CD8-positive, alpha-beta T cell (primary cell): ENCODE measurements at regions of chr10 and their contacts with region 1.

Region 1: DNA sequence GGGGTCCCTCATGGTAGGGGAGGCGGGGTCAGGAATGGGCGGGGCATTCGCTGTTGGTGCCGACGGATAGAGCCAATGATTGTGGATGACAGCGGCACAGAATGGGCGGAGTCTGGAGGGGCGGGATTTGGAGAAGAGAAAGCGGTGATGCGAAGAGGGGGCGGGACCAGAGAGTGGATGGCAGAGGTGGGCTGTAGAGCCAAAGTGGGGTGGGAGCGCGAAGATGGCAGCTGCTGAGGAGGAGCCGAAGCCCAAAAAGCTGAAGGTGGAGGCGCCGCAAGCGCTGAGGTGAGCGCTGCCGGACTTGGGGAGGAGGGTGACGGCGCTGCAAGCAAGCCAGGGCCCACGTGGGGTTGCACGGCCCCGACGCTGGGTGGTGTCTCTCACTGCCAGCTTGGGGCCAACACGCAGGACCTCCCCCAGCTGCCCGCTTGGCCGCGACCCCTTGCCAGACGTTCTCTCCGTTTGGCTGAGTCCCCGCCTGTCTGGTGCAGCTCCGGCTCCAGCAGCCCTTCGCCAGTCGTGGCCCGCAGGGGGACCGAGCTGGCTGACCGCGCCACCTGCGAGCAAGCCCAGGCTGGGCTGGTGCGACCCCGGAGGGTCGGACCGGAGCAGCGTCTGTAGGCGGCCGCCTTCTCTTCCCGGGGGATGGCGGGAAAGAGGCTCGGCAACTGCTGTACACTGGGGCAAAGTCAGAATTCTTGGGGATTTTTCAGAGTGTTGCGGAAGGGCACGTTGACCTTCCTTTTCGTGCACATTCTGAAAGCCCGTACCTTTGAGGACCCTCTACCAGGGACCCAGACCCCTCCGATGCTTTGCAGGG is at the start of gene ADK:
- DNase-seq: peak; percentile 99 to 100 (median 100)
- ATAC-seq: peak; percentile 96
- H3K4me3 ChIP-seq: peak within 1 kb of the TSS; percentile 70 to 78
- H3K4me3 Mint-ChIP-seq: no peak within 1 kb of the TSS
- H3K27ac ChIP-seq: peak within 1 kb of the TSS; percentile 86 to 99
- H3K27ac Mint-ChIP-seq: no peak within 1 kb of the TSS
- H3K4me1 ChIP-seq: peaks cover 30% of the 10 kb centered on the region
- H3K4me1 Mint-ChIP-seq: peaks cover 42% of the 10 kb centered on the region
- H3K27me3 ChIP-seq: no peaks in the 10 kb centered on the region
- H3K27me3 Mint-ChIP-seq: no peaks in the 10 kb centered on the region
- CTCF ChIP-seq: peak; percentile 22
- total RNA-seq, gene ADK: 20.7 to 21.8 TPM

Region 2: DNA sequence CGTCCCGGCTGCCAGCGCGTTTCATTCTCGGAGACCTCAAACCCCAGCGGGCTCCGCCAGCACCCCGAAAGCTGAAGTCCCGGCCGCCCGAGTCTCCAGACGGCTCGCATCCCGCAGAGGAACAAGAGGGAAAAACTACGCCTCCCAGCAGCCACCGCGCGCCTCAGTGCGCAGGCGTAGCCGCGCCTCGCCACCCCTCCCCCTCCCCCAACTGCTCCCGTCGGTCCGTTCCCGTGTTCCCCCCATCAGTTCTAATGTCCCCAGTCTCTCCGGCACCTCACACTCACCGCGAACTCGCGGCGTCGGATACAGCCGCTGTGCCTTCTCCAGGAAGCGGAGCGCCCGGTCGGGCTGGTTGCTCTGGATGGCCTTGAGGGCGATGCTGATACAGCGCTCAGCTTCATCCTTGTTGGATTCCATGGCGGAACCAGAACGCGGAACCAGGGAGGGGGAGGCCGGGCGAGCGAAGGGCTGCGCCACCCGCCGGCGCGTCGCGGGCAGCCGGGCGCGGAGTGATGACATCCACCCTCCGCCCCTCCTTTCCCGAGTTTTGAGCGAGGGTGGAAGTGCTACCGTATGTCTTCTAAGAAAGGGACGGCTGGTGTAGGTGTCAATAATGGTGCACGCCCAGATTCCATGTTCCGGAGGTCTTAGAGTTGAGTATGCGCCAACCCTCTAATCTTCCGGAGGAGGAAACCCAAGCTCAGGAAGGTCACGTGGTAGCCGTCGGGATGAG is 1796.6 kb before region 1 on chr10 and contains the start of gene DNAJB12:
- CTCF ChIA-PET with region 1: no interaction called
- POLR2A ChIA-PET with region 1: no interaction called
- intact Hi-C with region 1: loop called in 1 of 2 experiments (anchors 10 kb)
- DNase-seq: peak; percentile 76 to 95 (median 88)
- ATAC-seq: peak; percentile 82
- H3K4me3 ChIP-seq: peak within 1 kb of the TSS; percentile 96 to 98
- H3K4me3 Mint-ChIP-seq: peak within 1 kb of the TSS; percentile 98
- H3K27ac ChIP-seq: peak within 1 kb of the TSS; percentile 87 to 97
- H3K27ac Mint-ChIP-seq: peak within 1 kb of the TSS; percentile 96
- H3K4me1 ChIP-seq: peaks cover 19% of the 10 kb centered on the region
- H3K4me1 Mint-ChIP-seq: peaks cover 45% of the 10 kb centered on the region
- H3K27me3 ChIP-seq: no peaks in the 10 kb centered on the region
- H3K27me3 Mint-ChIP-seq: no peaks in the 10 kb centered on the region
- CTCF ChIP-seq: no peak
- total RNA-seq, gene DNAJB12: 33.9 to 37.5 TPM

Region 3: DNA sequence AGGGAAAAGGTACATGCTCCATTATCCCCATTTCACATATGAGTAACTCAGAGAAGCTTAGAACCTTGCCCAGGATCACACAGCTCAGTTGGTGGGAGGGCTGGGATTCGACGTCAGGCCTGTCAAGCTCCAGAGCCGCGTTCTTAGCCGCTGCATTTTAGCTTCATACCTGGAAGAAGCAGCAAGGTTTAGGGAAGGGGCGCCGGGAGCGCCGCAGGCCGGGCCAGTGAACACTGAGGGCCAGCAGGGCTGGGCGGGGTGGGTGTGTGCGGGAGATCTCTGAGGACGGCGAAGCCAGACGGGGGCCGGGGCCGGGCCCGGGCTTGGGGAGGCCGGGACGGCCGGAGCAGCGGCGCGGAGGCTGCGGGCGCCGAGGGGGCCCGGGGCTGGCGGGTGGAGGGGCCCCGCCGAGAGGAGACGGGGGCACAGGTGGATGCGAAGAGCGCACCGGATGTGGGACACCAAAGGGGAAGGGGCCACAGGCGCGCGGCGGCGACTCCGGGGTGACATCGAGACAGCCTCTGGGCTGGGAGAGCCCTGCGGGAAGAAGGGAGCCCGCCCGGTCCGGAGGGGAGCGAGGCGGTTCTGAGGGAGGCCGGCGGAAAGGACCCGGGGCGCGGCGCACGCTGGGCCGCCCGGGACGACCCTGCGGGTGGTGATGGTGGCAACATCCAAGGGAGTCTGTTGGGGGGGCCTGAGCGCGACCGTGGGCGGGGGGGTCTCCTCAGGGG is 340.4 kb before region 1 on chr10:
- CTCF ChIA-PET with region 1: interaction called, 3 read pairs
- POLR2A ChIA-PET with region 1: no interaction called
- intact Hi-C with region 1: loop called in 1 of 2 experiments (anchors 1 kb)
- DNase-seq: peak; percentile 19 to 79 (median 66)
- ATAC-seq: peak; percentile 12
- H3K4me3 ChIP-seq: peak overlapping the region; percentile 56 to 87
- H3K4me3 Mint-ChIP-seq: peak overlapping the region; percentile 89
- H3K27ac ChIP-seq: peak overlapping the region; percentile 71 to 91
- H3K27ac Mint-ChIP-seq: peak overlapping the region; percentile 95
- H3K4me1 ChIP-seq: peaks cover 48% of the 10 kb centered on the region
- H3K4me1 Mint-ChIP-seq: peaks cover 44% of the 10 kb centered on the region
- H3K27me3 ChIP-seq: no peaks in the 10 kb centered on the region
- H3K27me3 Mint-ChIP-seq: no peaks in the 10 kb centered on the region
- CTCF ChIP-seq: no peak

Region 4: GRCh38 chr10:74176380-74177139 is 25.3 kb after region 1 on chr10:
- CTCF ChIA-PET with region 1: interaction called, 5 read pairs
- POLR2A ChIA-PET with region 1: interaction called, 20 read pairs
- intact Hi-C with region 1: loop called (anchors 1 kb)
- DNase-seq: peak; percentile 89 to 99 (median 96)
- ATAC-seq: peak; percentile 93
- H3K4me3 ChIP-seq: peak overlapping the region; percentile 89 to 91
- H3K4me3 Mint-ChIP-seq: peak overlapping the region; percentile 93
- H3K27ac ChIP-seq: peak overlapping the region; percentile 85 to 89
- H3K27ac Mint-ChIP-seq: peak overlapping the region; percentile 97
- H3K4me1 ChIP-seq: peaks cover 34% of the 10 kb centered on the region
- H3K4me1 Mint-ChIP-seq: peaks cover 42% of the 10 kb centered on the region
- H3K27me3 ChIP-seq: no peaks in the 10 kb centered on the region
- H3K27me3 Mint-ChIP-seq: no peaks in the 10 kb centered on the region
- CTCF ChIP-seq: no peak

Region 5: DNA sequence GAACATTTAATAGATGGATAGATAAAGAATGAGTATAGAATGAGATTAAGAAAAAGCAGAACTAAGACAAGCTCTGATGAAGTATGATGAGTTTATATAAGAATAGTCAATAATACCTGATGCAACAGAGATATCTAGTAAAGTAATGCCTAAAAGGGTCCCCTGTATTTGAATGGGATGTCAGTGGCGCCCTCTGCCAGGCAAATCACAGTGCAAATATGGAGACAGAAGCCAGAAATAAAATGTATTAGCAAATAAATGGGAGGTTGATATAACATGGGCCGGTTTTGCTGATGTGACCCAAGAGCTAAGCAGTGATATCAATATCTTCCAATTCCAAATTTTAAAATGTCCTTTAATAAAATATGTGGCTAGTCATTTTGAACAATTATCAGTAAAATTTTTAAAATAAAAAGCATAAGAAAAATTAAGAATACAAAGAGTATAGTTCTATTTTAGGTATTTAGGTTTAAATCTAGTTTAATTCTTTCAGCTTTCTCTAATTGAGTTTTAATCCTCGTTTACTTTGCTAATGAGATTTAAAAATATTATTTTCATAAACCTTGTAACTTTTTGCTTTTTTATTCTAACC is 62.4 kb after region 1 on chr10:
- CTCF ChIA-PET with region 1: interaction called, 14 read pairs
- POLR2A ChIA-PET with region 1: interaction called, 3 read pairs
- intact Hi-C with region 1: loop called (anchors 5 kb)
- DNase-seq: peak; percentile 20 to 70 (median 56)
- ATAC-seq: peak; percentile 46
- H3K4me3 ChIP-seq: no peak overlapping the region
- H3K4me3 Mint-ChIP-seq: no peak overlapping the region
- H3K27ac ChIP-seq: no peak overlapping the region
- H3K27ac Mint-ChIP-seq: no peak overlapping the region
- H3K4me1 ChIP-seq: no peaks in the 10 kb centered on the region
- H3K4me1 Mint-ChIP-seq: peaks cover 20% of the 10 kb centered on the region
- H3K27me3 ChIP-seq: no peaks in the 10 kb centered on the region
- H3K27me3 Mint-ChIP-seq: no peaks in the 10 kb centered on the region
- CTCF ChIP-seq: peak; percentile 51

Region 6: GRCh38 chr10:74589226-74589673 is 438.0 kb after region 1 on chr10:
- CTCF ChIA-PET with region 1: no interaction called
- POLR2A ChIA-PET with region 1: no interaction called
- intact Hi-C with region 1: loop called in 1 of 2 experiments (anchors 5 kb)
- DNase-seq: peak; percentile 70 to 97 (median 86)
- ATAC-seq: peak; percentile 76
- H3K4me3 ChIP-seq: no peak overlapping the region
- H3K4me3 Mint-ChIP-seq: peak overlapping the region; percentile 49
- H3K27ac ChIP-seq: peak overlapping the region; percentile 36 to 61
- H3K27ac Mint-ChIP-seq: peak overlapping the region; percentile 87
- H3K4me1 ChIP-seq: peaks cover 48% of the 10 kb centered on the region
- H3K4me1 Mint-ChIP-seq: peaks cover 61% of the 10 kb centered on the region
- H3K27me3 ChIP-seq: no peaks in the 10 kb centered on the region
- H3K27me3 Mint-ChIP-seq: no peaks in the 10 kb centered on the region
- CTCF ChIP-seq: no peak

Region 7: DNA sequence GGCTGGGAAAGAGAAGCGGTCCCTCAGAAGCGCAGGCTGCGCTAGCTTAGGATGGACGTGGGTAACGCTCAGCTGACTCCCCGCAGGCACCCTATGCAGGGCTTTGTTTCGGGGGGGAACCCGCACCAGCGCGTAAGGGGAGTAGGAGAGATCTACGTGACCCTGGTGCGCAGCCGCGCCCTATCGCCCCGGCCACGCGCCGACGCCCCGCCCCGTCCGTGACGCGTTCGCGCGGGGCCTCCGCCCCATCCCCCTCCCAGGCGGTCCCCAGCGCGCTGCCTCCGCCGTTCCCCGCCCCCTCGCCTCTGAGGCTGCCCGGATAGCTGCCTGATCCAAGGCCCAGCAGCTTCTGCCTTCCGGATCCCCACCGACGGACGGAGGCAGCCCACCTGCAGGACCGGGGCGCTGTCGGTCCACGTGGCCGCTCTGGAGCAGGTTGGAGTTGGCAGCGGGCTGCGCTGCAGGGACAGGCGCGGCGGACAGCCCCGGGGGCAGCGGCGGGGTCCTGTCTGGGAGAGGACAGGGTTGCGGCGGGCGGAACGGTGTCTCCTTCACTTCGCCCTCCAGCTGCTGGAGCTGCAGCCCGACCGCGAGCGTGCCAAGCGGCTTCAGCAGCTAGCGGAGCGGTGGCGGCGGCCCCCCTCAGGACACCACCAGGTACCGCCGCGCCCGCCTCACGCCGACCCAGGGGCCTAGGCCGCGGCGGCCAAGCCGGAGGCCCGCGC is 1059.2 kb after region 1 on chr10 and contains the start of gene VDAC2:
- CTCF ChIA-PET with region 1: no interaction called
- POLR2A ChIA-PET with region 1: no interaction called
- intact Hi-C with region 1: loop called in 1 of 2 experiments (anchors 1 kb)
- DNase-seq: peak; percentile 93 to 99 (median 96)
- ATAC-seq: peak; percentile 89
- H3K4me3 ChIP-seq: peak within 1 kb of the TSS; percentile 90 to 93
- H3K4me3 Mint-ChIP-seq: peak within 1 kb of the TSS; percentile 97
- H3K27ac ChIP-seq: peak within 1 kb of the TSS; percentile 99 to 100
- H3K27ac Mint-ChIP-seq: peak within 1 kb of the TSS; percentile 100
- H3K4me1 ChIP-seq: peaks cover 28% of the 10 kb centered on the region
- H3K4me1 Mint-ChIP-seq: peaks cover 26% of the 10 kb centered on the region
- H3K27me3 ChIP-seq: no peaks in the 10 kb centered on the region
- H3K27me3 Mint-ChIP-seq: no peaks in the 10 kb centered on the region
- CTCF ChIP-seq: no peak
- total RNA-seq, gene VDAC2: 184 to 187 TPM